Naive thymus-derived CD4-positive, alpha-beta T cell (primary cell): ENCODE measurements at regions of chr1 and their contacts with region 1.

Region 1: DNA sequence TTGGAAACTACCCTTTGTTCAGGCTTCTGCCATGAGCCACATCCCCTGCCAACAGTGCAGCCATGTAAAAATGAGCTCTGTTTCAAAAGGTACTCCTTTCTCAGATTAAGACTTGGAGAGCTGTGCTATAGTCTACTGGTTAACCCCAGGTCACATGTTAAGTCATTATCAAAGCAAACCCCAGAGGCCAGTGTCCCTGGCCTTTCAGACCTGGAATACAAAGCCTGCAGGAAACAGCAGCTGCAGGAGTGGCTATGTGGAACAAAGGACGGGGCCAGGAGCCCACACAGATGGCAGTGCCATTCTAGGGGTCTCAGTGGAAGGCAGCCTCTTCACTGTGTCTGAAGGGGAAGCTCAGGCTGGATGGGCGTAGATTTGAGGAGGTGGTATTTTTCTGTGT is 6.7 kb downstream of the ZNF496 start:
- DNase-seq: no peak
- ATAC-seq: no peak
- H3K4me3 ChIP-seq: no peak overlapping the region
- H3K4me3 Mint-ChIP-seq: no peak overlapping the region
- H3K27ac ChIP-seq: no peak overlapping the region
- H3K27ac Mint-ChIP-seq: peak overlapping the region in 2 of 9 donors; percentile 51 to 73
- H3K4me1 ChIP-seq: peaks cover 0 to 11% of the 10 kb centered on the region in 2 donors
- H3K4me1 Mint-ChIP-seq: peaks cover 7 to 40% (median 28%) of the 10 kb centered on the region in 7 donors
- H3K27me3 ChIP-seq: no peaks in the 10 kb centered on the region
- H3K27me3 Mint-ChIP-seq: no peaks in the 10 kb centered on the region

Region 2: DNA sequence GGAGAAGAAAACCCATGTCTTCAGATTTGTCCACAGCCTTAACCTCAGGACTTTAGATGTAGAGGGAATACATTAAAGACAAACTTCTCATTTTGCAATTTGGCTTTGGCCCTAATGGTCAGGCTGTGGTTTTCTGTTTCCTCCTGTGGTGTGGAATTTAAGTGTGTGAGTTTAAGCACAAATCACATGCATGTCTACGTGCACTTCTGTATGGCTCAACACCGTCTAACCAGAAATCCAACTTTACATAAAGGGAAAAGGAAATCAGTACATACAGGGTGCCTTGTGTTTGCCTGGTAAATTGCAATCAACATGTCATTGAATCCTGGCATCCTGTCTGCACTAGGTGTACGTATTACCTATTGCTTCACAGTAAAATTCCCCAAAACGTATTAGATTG is 151.9 kb before region 1 on chr1:
- CTCF ChIA-PET with region 1: no interaction called
- POLR2A ChIA-PET with region 1: no interaction called
- intact Hi-C with region 1: loop called in 1 of 2 experiments (anchors 5 kb)
- DNase-seq: no peak
- ATAC-seq: peak; percentile 1
- H3K4me3 ChIP-seq: no peak overlapping the region
- H3K4me3 Mint-ChIP-seq: peak overlapping the region in 1 of 10 donors; percentile 29
- H3K27ac ChIP-seq: no peak overlapping the region
- H3K27ac Mint-ChIP-seq: peak overlapping the region in 1 of 9 donors; percentile 59
- H3K4me1 ChIP-seq: no peaks in the 10 kb centered on the region
- H3K4me1 Mint-ChIP-seq: peaks cover 0 to 22% (median 11%) of the 10 kb centered on the region in 7 donors
- H3K27me3 ChIP-seq: no peaks in the 10 kb centered on the region
- H3K27me3 Mint-ChIP-seq: no peaks in the 10 kb centered on the region